Activated T-helper 1 cell treated with anti-CD3 and anti-CD28 coated beads, Interleukin-12 subunit alpha, Interleukin-12 subunit beta, Interleukin-2, Interleukin-4 antibody, amounts not matched to agents 30 ng/mL and 10 ng/mL and 1 ng/mL, durations not matched to agents 14 hours and 24 hours and 36 hours (primary cell): ENCODE measurements at regions of chr16 and their contacts with region 1.

Region 1: GRCh38 chr16:89217388-89218191 is at the start of gene ZNF778:
- DNase-seq: peak; percentile 84
- H3K4me3 Mint-ChIP-seq: peak within 1 kb of the TSS; percentile 63
- H3K27ac Mint-ChIP-seq: peak within 1 kb of the TSS; percentile 37
- H3K4me1 Mint-ChIP-seq: peaks cover 12% of the 10 kb centered on the region
- H3K27me3 Mint-ChIP-seq: no peaks in the 10 kb centered on the region
- total RNA-seq, gene ZNF778: 8.1 and 9.5 TPM in 2 replicates

Region 2: DNA sequence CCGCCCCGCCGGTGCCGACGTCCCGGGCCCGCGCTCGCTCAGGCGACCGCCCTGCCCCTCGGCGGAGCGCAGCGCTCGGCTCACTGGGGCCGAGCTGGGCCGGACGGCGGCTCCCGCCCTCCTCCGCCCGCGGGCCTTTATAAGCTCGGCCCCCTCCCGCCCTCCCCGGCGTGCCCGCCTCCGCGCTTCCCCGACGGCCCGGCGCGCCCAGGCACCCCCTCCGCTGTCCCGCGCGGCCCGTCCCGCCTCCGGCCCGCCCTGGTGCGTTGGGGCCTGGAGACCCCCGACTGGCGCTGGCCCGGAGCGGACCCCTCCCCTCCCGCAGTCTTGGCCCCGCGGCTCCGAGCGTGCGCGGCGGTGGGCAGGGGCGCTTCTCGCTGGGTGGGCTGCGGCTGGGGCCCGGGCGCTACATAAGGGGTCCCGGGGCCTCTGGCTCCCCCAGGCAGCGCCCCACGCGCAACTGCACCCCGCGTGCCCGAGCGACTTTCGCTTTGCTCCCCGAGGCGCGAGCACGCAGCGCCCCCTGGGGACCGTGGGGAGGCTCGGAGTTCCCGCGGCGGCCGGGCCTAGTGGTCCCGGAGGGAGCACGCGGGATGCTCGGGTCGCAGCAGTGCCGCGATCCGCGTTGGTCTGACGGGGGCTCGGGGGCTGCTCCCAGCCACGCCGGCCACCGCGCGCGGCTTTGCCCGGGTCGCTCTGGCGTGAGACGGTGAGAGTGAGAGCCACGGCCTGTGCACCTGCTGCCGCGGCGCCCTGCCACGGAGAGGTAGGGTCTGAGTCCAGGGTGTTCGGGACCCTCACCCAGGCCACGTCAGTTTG is 432.3 kb before region 1 on chr16 and contains the start of gene PIEZO1:
- intact Hi-C with region 1: loop called (anchors 1 kb)
- DNase-seq: peak; percentile 80
- H3K4me3 Mint-ChIP-seq: peak within 1 kb of the TSS; percentile 82
- H3K27ac Mint-ChIP-seq: peak within 1 kb of the TSS; percentile 87
- H3K4me1 Mint-ChIP-seq: peaks cover 43% of the 10 kb centered on the region
- H3K27me3 Mint-ChIP-seq: peaks cover 4% of the 10 kb centered on the region
- total RNA-seq, gene PIEZO1: 214 and 217 TPM in 2 replicates

Region 3: DNA sequence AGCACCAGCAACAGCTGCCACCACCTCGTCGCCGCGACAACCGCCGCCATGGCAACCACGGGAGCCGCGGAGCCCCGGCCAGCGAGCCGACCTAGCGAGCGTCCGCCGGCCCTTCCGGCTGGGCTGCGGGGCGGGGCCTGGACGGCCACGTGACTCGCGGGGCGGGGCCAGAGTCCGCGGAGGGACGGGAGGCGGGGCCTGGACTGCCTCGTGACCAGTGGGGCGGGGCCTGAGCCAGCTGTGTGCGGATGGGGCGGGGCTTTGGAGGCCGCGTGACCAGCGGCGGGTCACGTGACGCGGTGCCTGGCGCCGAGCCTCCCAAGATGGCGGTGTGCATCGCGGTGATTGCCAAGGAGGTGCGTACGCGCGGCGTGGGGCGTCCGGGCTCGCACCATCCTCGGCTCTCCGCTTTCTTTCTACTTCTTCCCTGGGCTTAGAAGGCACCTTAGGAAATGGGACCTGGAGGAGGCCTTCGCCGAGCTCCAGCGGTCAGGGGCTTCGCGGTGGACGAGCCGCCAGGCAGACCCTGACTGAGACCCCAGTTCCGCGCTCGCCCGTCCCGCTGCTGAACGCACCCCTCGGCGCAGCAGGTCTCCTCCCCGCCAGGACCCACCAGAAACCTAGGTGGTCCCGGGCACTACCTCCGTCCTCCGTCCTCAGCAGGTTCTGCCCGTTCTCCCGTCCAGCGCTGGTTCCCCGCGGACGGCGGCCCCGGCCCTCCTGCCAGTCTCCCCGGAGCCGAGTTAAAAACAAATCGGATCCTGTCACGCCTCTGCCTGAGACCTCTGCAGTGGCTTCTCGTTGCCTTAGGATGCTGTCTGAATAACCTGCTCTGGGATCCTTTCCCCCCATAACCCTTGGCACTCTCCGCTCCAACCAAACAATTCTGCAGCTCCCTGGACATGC is 360.5 kb before region 1 on chr16 and contains the starts of genes GALNS and TRAPPC2L:
- intact Hi-C with region 1: loop called (anchors 1 kb)
- DNase-seq: peak; percentile 98
- H3K4me3 Mint-ChIP-seq: peak within 1 kb of the TSS; percentile 96
- H3K27ac Mint-ChIP-seq: peak within 1 kb of the TSS; percentile 88
- H3K4me1 Mint-ChIP-seq: peaks cover 25% of the 10 kb centered on the region
- H3K27me3 Mint-ChIP-seq: no peaks in the 10 kb centered on the region
- total RNA-seq, gene GALNS: 21.9 and 23.8 TPM in 2 replicates
- total RNA-seq, gene TRAPPC2L: 63.1 and 65.4 TPM in 2 replicates

Region 4: DNA sequence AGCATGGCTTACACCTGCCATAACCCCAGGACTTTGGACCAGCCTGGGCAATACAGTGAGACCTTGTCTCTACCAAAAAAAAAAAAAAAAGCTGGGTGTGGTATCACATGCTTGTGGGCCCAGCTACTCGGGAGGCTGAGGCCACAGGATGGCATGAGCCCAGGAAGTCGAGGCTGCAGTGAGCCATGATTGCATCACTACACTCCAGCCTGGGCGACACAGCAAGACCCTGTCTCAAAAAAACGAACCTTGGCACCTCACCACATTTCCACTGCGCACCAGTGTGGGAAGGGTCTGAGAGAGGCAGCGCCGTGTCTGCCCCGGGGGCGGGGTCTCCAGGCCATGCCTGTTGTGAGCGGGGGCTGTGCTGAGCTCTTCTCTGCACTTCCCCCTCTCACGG is 117.7 kb before region 1 on chr16:
- intact Hi-C with region 1: loop called (anchors 5 kb)
- DNase-seq: no peak
- H3K4me3 Mint-ChIP-seq: peak overlapping the region; percentile 56
- H3K27ac Mint-ChIP-seq: peak overlapping the region; percentile 73
- H3K4me1 Mint-ChIP-seq: peaks cover 66% of the 10 kb centered on the region
- H3K27me3 Mint-ChIP-seq: no peaks in the 10 kb centered on the region

Region 5: DNA sequence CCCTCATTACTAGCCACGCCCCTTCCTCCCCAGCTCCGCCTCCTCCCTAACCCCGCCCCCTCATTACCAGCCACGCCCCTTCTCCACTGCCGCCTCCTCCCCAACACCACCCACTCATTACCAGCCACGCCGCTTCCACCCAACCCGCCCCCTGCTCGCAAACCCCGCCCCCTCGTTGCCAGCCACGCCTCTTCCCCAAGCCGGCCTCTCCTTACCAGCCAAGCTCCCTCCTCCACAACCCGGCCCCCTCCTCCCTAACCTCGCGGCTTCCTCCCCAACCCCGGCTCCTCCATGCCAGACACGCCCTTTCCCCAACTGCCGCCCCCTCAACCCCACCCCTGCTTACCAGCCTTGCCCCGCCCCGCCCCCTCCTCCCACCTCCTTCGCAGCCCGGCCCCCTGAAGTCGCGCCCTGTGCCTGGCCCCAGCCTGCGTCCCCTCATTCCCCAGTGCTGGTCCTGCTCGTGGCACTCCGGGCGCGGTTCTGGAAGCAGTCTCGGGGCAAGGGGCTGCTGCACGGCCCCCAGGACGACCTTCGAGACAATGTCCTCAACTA is 24.5 kb before region 1 on chr16:
- intact Hi-C with region 1: loop called (anchors 1 kb)
- DNase-seq: peak; percentile 48
- H3K4me3 Mint-ChIP-seq: no peak overlapping the region
- H3K27ac Mint-ChIP-seq: no peak overlapping the region
- H3K4me1 Mint-ChIP-seq: no peaks in the 10 kb centered on the region
- H3K27me3 Mint-ChIP-seq: no peaks in the 10 kb centered on the region

Region 6: GRCh38 chr16:89815639-89816348 is 598.2 kb after region 1 on chr16:
- intact Hi-C with region 1: loop called (anchors 10 kb)
- DNase-seq: no peak
- H3K4me3 Mint-ChIP-seq: peak overlapping the region; percentile 86
- H3K27ac Mint-ChIP-seq: peak overlapping the region; percentile 58
- H3K4me1 Mint-ChIP-seq: peaks cover 26% of the 10 kb centered on the region
- H3K27me3 Mint-ChIP-seq: no peaks in the 10 kb centered on the region